A549 (cell line): ENCODE measurements at regions of chr7 and their contacts with region 1.

Region 1: DNA sequence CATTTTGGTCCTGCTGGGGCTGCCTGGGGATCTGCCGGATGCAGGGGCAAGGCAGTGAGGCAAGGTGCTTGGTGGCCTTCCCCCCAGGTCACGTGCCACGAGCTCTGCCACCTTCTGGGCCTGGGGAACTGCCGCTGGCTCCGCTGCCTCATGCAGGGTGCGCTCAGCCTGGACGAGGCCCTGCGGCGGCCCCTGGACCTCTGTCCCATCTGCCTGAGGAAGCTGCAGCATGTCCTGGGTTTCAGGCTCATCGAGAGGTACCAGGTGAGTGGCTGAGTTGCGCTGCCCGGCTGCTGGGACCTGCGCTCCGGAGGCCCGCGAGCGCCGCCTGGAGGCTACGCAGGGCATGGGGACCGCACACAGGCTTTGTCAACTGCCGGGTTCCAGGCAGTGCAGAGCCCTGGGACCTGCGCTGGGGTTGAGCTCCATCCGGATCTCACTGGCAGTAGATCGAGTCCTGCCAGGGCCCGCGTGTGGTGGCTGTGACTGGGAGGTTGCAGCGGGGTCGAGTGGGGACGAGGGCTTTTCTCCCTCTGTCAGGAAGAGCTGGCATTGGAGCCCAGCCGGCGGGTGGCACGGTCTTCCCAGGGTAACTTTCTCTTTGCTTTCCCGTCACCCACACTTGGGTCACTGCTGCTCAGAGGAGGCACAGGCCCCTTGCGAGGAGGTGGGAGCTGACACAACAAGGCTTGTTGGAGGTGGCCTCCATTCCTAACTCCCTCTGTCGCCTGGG is 21.7 kb downstream of the AMZ1 start:
- DNase-seq: peak; percentile 73 to 74
- ATAC-seq: peak; percentile 83 to 95
- H3K4me3 ChIP-seq: no peak overlapping the region
- H3K27ac ChIP-seq: 0 out of 6 replicates have a peak overlapping the region, but pooled peaks of 1 of the 2 experiments have one; percentile 3
- H3K4me1 ChIP-seq: no peaks in the 10 kb centered on the region
- CTCF ChIP-seq: peak; percentile 80
- EP300 ChIP-seq: no peak
- POLR2A ChIP-seq: no peak
- RAD21 ChIP-seq: peak; percentile 79 to 80

Region 2: DNA sequence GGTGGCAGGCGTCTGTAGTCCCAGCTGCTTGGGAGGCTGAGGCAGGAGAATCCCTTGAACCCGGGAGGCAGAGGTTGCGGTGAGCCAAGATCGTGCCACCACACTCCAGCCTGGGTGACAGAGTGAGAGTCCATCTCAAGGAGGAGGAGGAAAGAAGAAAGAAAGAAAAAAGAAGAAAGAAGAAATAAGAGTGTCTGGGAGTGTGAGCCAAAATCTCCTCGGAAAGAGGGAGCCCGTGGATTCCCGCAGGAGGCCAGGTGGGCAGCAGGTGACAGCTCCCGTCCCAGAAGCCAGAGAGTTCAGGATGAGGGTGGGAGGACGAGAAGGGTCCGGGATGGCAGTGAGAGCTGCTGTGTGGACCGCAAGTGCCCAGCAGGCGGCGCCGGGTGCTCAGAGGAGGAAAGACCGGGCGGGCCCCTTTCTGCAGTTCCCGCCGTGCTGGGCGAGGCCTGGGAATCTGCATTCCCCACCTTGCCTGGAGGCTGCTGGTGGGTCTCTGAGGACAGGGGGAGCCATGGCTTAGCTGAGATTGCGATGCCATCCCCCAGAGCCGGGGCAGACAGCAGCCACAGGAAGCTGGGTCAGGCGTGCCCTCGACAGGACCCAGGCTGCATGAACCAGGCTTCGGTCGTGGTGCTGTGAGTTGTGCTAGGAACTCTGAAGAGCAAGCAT is 38.9 kb before region 1 on chr7:
- CTCF ChIA-PET with region 1: interaction called, 28 read pairs
- POLR2A ChIA-PET with region 1: no interaction called
- DNase-seq: peak; percentile 72 to 83
- ATAC-seq: peak; percentile 86 to 95
- H3K4me3 ChIP-seq: no peak overlapping the region
- H3K27ac ChIP-seq: no peak overlapping the region
- H3K4me1 ChIP-seq: no peaks in the 10 kb centered on the region
- CTCF ChIP-seq: peak; percentile 79
- EP300 ChIP-seq: no peak
- POLR2A ChIP-seq: no peak
- RAD21 ChIP-seq: peak; percentile 83 to 85

Region 3: GRCh38 chr7:2688409-2689331 is 21.0 kb before region 1 on chr7:
- CTCF ChIA-PET with region 1: interaction called, 22 read pairs
- POLR2A ChIA-PET with region 1: no interaction called
- DNase-seq: no peak
- ATAC-seq: peak in 1 of 2 experiments; percentile 19; a peak in 1 of 6 replicates
- H3K4me3 ChIP-seq: no peak overlapping the region
- H3K27ac ChIP-seq: peak overlapping the region in 1 of 2 experiments; percentile 58; a peak in 2 of 6 replicates
- H3K4me1 ChIP-seq: 0 out of 3 replicates have a peak, but pooled peaks cover 4% of the 10 kb centered on the region
- CTCF ChIP-seq: no peak
- EP300 ChIP-seq: no peak
- POLR2A ChIP-seq: no peak
- RAD21 ChIP-seq: no peak

Region 4: DNA sequence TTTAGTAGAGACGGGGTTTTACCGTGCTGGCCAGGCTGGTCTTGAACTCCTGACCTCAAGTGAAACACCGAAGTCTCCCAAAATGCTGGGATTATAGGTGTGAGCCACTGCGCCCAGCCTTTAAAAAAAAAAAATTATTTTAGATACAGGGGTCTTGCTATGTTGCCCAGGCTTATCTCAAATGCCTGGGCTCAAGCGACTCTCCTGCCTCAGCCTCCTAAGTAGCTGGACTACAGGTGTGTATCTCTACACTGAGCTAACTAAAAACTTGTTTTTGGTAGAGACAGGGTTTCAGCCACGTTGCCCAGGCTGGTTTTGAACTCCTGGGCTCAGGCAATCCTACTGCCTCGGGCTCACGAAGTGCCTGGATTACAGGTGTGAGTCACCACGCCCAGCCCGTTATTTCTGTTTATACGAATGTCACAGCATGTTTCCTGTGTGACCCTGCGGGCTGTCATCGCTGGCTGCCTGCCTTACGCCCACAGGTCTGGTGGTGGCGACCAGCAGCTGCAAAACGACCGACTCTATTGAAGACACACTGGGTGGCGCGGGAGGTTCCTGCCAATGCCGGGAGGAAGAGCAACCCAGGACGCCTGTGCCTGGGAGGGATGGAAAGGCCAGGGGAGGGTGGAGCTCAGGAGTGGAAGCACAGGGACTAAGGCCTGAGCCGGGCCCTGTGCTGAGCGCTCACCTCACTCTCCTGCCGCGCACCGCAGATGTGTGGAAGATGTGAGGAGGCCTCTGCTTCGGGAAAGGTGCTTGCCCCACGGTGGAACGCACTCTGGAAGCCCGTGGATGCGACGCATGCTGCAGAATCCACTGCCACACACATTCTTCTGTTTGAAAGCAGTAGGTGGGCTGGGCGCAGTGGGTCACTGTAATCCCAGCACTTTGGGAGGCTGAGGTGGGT is 11.1 kb after region 1 on chr7:
- CTCF ChIA-PET with region 1: interaction called, 36 read pairs
- POLR2A ChIA-PET with region 1: no interaction called
- DNase-seq: peak; percentile 28 to 58
- ATAC-seq: peak; percentile 45 to 67; a peak in 3 of 6 replicates
- H3K4me3 ChIP-seq: no peak overlapping the region
- H3K27ac ChIP-seq: peak overlapping the region in 1 of 2 experiments; percentile 43; a peak in 2 of 6 replicates
- H3K4me1 ChIP-seq: no peaks in the 10 kb centered on the region
- CTCF ChIP-seq: peak; percentile 6; the same call in 1 of the 3 replicates
- EP300 ChIP-seq: no peak
- POLR2A ChIP-seq: no peak
- RAD21 ChIP-seq: peak; percentile 30 to 52; a peak in 2 of 5 replicates

Region 5: GRCh38 chr7:2737771-2738540 is 28.2 kb after region 1 on chr7:
- CTCF ChIA-PET with region 1: interaction called, 11 read pairs
- POLR2A ChIA-PET with region 1: no interaction called
- DNase-seq: no peak
- ATAC-seq: no peak
- H3K4me3 ChIP-seq: no peak overlapping the region
- H3K27ac ChIP-seq: no peak overlapping the region
- H3K4me1 ChIP-seq: no peaks in the 10 kb centered on the region
- CTCF ChIP-seq: no peak
- EP300 ChIP-seq: no peak
- POLR2A ChIP-seq: no peak
- RAD21 ChIP-seq: no peak

Region 6: DNA sequence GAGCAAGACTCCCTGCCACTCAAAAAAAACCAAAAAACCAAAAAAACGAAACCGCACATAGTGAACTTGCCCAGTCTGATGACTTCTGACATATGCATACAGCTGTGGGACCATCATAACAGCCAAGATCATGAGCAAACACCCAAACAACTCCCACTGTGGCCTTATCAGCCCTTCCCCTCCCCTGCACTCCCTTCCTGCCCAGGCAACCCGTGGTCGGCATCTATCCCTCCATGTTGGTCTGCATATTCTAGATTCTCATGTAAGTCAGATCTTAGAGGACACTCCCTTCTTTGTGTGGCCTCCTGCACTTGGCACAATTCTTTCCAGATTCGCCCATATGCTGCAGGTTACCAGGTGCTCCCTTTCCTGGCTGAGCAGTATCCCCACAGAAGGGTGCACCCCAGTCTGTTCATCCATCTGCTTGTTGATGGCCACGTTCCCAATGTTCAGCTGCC is 61.6 kb after region 1 on chr7:
- CTCF ChIA-PET with region 1: interaction called, 10 read pairs
- POLR2A ChIA-PET with region 1: no interaction called
- DNase-seq: no peak
- ATAC-seq: no peak
- H3K4me3 ChIP-seq: no peak overlapping the region
- H3K27ac ChIP-seq: no peak overlapping the region
- H3K4me1 ChIP-seq: no peaks in the 10 kb centered on the region
- CTCF ChIP-seq: no peak
- EP300 ChIP-seq: no peak
- POLR2A ChIP-seq: no peak
- RAD21 ChIP-seq: no peak

Region 7: DNA sequence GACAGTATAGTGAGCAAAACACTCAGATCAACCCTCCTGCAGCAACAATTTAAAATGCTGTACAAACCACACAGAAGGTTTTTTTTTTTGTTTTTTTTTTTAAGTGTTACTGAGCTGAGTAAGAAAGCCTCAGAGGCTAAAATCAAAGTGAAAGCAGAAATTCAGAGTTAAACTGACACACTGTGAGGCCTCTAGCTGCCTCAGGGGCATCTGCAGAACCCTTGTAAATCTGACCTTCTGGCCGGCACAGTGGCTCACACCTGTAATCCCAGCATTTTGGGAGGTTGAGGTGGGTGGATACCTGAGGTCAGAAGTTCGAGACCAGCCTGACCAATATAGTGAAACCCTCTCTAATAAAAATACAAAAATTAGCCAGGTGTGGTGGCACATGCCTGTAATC is 141.8 kb after region 1 on chr7:
- CTCF ChIA-PET with region 1: no interaction called
- POLR2A ChIA-PET with region 1: no interaction called
- DNase-seq: no peak
- ATAC-seq: no peak
- H3K4me3 ChIP-seq: no peak overlapping the region
- H3K27ac ChIP-seq: no peak overlapping the region
- H3K4me1 ChIP-seq: no peaks in the 10 kb centered on the region
- CTCF ChIP-seq: no peak
- EP300 ChIP-seq: no peak
- POLR2A ChIP-seq: no peak
- RAD21 ChIP-seq: no peak

Region 8: DNA sequence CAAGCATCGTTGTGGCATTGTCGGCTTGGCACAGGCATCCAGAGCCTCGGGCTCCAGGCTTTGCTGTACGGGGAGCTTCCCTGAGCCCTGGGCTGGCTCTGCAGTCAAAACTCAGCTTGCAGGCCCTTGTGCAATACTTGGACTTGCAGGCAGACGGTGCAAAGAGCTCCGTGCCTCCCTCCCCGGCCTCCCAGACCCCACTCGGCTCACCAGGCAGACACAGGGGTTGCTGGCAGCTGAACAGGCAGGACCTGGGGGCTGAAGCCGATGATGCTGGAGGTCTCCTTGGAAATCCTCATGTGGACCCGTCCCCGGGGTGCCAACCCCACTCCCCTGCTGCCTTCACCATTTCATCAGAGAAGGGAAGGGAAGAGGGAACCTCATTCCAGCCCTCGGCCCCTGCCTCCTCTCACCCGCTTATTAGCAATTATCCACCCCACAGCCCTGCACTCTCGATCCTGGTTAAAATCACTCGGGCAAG is 194.0 kb after region 1 on chr7:
- CTCF ChIA-PET with region 1: no interaction called
- POLR2A ChIA-PET with region 1: no interaction called
- DNase-seq: no peak
- ATAC-seq: peak in 1 of 2 experiments; percentile 53; a peak in 3 of 6 replicates
- H3K4me3 ChIP-seq: no peak overlapping the region
- H3K27ac ChIP-seq: no peak overlapping the region
- H3K4me1 ChIP-seq: no peaks in the 10 kb centered on the region
- CTCF ChIP-seq: no peak
- EP300 ChIP-seq: no peak
- POLR2A ChIP-seq: no peak
- RAD21 ChIP-seq: no peak

Region 9: GRCh38 chr7:3013975-3014792 is 304.5 kb after region 1 on chr7:
- CTCF ChIA-PET with region 1: no interaction called
- POLR2A ChIA-PET with region 1: no interaction called
- DNase-seq: no peak
- ATAC-seq: no peak
- H3K4me3 ChIP-seq: no peak overlapping the region
- H3K27ac ChIP-seq: no peak overlapping the region
- H3K4me1 ChIP-seq: no peaks in the 10 kb centered on the region
- CTCF ChIP-seq: no peak
- EP300 ChIP-seq: no peak
- POLR2A ChIP-seq: no peak
- RAD21 ChIP-seq: no peak